GM12878 (cell line): ENCODE measurements at regions of chr3 and their contacts with region 1.

Region 1: GRCh38 chr3:149566292-149566975 is 91.4 kb downstream of the WWTR1 start:
- DNase-seq: no peak
- ATAC-seq: no peak
- H3K4me3 ChIP-seq: no peak overlapping the region
- H3K27ac ChIP-seq: no peak overlapping the region
- H3K4me1 ChIP-seq: no peaks in the 10 kb centered on the region
- H3K27me3 ChIP-seq: no peaks in the 10 kb centered on the region
- CTCF ChIP-seq: no peak
- EP300 ChIP-seq: no peak
- POLR2A ChIP-seq: no peak
- RAD21 ChIP-seq: no peak

Region 2: DNA sequence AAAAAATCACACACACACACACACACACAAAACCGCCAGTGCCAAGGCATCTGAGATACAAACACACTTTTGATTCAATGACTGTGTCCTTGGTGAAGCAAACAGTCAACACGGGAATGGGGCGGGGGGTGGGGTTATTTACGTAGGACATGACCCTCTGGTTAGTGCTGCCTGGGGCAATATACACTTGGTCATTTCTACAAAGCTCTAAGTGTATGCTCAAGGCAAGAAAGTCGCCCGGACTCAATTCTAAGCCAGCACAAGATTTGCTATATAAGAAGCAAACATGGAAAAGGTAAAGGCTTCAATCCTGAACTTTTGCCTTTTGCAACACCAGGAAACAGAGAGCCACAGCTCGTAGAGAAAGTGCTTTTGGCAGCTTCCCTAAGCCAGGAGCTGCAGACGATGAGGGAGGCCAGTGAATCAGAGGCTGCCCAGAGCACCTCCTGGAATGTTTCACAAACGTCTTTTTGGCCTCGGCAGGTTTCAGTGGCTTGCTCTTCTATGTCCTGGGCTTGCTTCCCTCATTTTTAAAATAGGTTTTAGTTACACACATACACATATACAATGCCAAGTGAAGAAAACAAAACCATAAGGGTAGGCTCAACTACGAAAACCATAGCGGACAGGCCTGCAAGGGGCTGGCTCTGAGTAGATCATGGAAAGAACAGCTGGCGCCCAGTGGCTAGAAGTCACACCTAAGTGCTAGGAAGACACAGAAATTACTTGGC is 18.3 kb before region 1 on chr3:
- CTCF ChIA-PET with region 1: interaction called, 17 read pairs
- POLR2A ChIA-PET with region 1: no interaction called
- RAD21 ChIA-PET with region 1: interaction called, 3 read pairs
- SMC1A ChIA-PET with region 1: interaction called, 7 read pairs
- in situ Hi-C with region 1: no loop called
- intact Hi-C with region 1: no loop called
- DNase-seq: no peak
- ATAC-seq: no peak
- H3K4me3 ChIP-seq: no peak overlapping the region
- H3K27ac ChIP-seq: no peak overlapping the region
- H3K4me1 ChIP-seq: peaks cover 9% of the 10 kb centered on the region
- H3K27me3 ChIP-seq: no peaks in the 10 kb centered on the region
- CTCF ChIP-seq: no peak
- EP300 ChIP-seq: no peak
- POLR2A ChIP-seq: no peak
- RAD21 ChIP-seq: no peak

Region 3: DNA sequence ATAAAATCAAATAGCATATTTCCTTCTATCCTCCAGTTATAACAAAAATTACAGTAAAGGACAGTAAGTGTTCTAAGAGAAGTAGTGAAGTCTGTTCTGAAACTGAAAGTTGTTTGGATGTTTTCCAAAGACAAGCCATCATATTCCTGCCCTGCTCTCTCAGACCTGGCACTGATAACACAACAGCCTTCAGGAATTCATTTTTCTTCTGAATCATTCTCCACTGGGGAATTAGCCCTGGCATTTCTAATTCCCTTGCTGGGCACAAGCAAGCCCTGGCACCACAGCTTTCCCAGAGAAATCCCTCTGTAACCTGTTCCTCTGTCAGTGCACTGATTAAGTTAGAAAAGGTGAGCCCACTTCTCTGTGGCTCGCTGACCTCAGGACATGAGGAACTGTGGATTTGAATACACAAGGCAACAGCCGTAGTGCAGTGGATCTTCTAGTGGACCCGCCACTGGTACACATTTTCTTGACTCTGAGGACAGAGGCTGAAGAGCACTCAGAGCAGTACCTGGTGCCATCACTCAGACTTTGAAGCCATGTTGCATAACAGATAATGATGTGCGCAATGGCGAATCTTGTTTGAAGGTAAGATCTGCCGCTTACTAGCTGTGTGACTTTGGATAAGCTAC is 29.8 kb after region 1 on chr3:
- CTCF ChIA-PET with region 1: interaction called, 80 read pairs
- POLR2A ChIA-PET with region 1: interaction called, 5 read pairs
- RAD21 ChIA-PET with region 1: interaction called, 181 read pairs
- SMC1A ChIA-PET with region 1: interaction called, 505 read pairs
- in situ Hi-C with region 1: no loop called
- intact Hi-C with region 1: loop called (anchors 5 kb)
- DNase-seq: no peak
- ATAC-seq: no peak
- H3K4me3 ChIP-seq: no peak overlapping the region
- H3K27ac ChIP-seq: no peak overlapping the region
- H3K4me1 ChIP-seq: peaks cover 7% of the 10 kb centered on the region
- H3K27me3 ChIP-seq: no peaks in the 10 kb centered on the region
- CTCF ChIP-seq: no peak
- EP300 ChIP-seq: no peak
- POLR2A ChIP-seq: no peak
- RAD21 ChIP-seq: no peak

Region 4: DNA sequence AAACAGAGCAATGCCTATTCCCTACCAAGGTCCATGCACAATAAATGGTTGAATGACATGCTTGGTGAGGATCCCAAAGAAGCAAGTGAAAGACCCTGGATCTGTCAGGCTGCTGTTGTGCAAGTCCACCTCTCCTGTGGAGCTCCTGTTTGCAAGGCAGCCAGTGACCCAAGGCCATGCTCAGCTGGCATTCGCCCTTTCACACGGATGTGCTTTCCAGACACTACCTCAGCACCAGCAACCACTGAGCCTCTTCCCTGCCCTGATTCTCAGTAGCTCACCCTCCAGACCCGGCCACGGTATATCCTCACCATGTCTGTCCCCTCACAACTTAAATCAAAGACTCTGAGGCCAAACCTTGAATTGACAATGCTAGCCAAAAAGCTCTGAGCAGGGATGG is 68.1 kb after region 1 on chr3:
- CTCF ChIA-PET with region 1: interaction called, 7 read pairs
- POLR2A ChIA-PET with region 1: no interaction called
- RAD21 ChIA-PET with region 1: interaction called, 4 read pairs
- SMC1A ChIA-PET with region 1: interaction called, 11 read pairs
- in situ Hi-C with region 1: no loop called
- intact Hi-C with region 1: no loop called
- DNase-seq: no peak
- ATAC-seq: no peak
- H3K4me3 ChIP-seq: no peak overlapping the region
- H3K27ac ChIP-seq: no peak overlapping the region
- H3K4me1 ChIP-seq: no peaks in the 10 kb centered on the region; the same call in 1 of the 2 replicates
- H3K27me3 ChIP-seq: no peaks in the 10 kb centered on the region
- CTCF ChIP-seq: no peak
- EP300 ChIP-seq: no peak
- POLR2A ChIP-seq: no peak
- RAD21 ChIP-seq: no peak

Region 5: GRCh38 chr3:149670742-149671492 is 104.5 kb after region 1 on chr3:
- CTCF ChIA-PET with region 1: interaction called, 29 read pairs
- POLR2A ChIA-PET with region 1: no interaction called
- RAD21 ChIA-PET with region 1: interaction called, 18 read pairs
- SMC1A ChIA-PET with region 1: interaction called, 19 read pairs
- in situ Hi-C with region 1: no loop called
- intact Hi-C with region 1: no loop called
- DNase-seq: no peak
- ATAC-seq: peak; percentile 72
- H3K4me3 ChIP-seq: peak overlapping the region; percentile 4
- H3K27ac ChIP-seq: no peak overlapping the region
- H3K4me1 ChIP-seq: no peaks in the 10 kb centered on the region; the same call in 1 of the 2 replicates
- H3K27me3 ChIP-seq: no peaks in the 10 kb centered on the region
- CTCF ChIP-seq: no peak
- EP300 ChIP-seq: no peak
- POLR2A ChIP-seq: no peak
- RAD21 ChIP-seq: no peak

Region 6: DNA sequence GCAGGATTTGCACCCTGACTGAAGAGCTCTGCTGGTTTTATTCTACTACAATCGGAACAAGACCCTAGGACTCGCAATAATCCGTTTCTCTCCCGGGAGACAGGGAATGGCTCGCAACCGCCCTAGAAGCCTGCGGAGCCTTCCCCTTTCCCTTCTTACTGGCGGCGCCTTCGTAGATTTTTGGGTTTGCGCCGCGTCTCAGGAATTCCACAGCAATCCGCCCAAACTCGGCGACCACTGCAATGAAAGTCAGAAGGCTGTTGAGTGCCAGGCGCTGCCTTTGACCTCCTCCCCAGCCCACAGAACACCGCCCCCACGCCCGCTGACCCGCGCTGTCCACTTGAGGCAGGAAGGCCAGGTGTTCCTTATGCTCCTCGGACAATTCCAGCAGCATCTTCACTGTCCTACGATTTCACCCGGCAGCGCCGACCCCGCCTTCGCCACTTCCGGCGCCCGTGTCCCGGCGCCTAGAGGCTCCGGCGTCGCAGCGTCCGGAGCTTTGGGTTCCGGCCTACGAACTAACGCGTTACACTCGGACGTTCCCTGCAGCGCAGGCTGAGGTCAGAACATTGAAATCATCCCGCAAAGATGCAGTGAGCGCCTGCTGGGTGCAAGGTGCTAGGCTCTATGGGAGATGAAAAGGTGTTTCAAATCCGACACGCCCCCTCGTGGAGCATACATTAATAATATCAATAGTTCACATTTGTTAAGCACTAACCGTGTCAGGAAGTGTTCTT is 185.8 kb after region 1 on chr3 and contains the start of gene COMMD2:
- CTCF ChIA-PET with region 1: interaction called, 35 read pairs
- POLR2A ChIA-PET with region 1: interaction called, 3 read pairs
- RAD21 ChIA-PET with region 1: interaction called, 34 read pairs
- SMC1A ChIA-PET with region 1: interaction called, 21 read pairs
- in situ Hi-C with region 1: no loop called
- intact Hi-C with region 1: no loop called
- DNase-seq: peak; percentile 84
- ATAC-seq: peak; percentile 100
- H3K4me3 ChIP-seq: peak within 1 kb of the TSS; percentile 85
- H3K27ac ChIP-seq: peak within 1 kb of the TSS; percentile 54
- H3K4me1 ChIP-seq: no peaks in the 10 kb centered on the region
- H3K27me3 ChIP-seq: no peaks in the 10 kb centered on the region
- CTCF ChIP-seq: peak; percentile 21 to 47 (median 46); a peak in 5 of 6 replicates
- EP300 ChIP-seq: no peak
- POLR2A ChIP-seq: peak; percentile 95
- RAD21 ChIP-seq: peak; percentile 40
- polyA plus RNA-seq, gene COMMD2: 59.4 to 97.0 TPM

Region 7: GRCh38 chr3:149812606-149813366 is 246.4 kb after region 1 on chr3 and contains the start of gene RNF13:
- CTCF ChIA-PET with region 1: interaction called, 14 read pairs
- POLR2A ChIA-PET with region 1: interaction called, 6 read pairs
- RAD21 ChIA-PET with region 1: interaction called, 26 read pairs
- SMC1A ChIA-PET with region 1: interaction called, 10 read pairs
- in situ Hi-C with region 1: no loop called
- intact Hi-C with region 1: no loop called
- DNase-seq: peak; percentile 87
- ATAC-seq: peak; percentile 94
- H3K4me3 ChIP-seq: peak within 1 kb of the TSS; percentile 80
- H3K27ac ChIP-seq: peak within 1 kb of the TSS; percentile 93
- H3K4me1 ChIP-seq: no peaks in the 10 kb centered on the region
- H3K27me3 ChIP-seq: no peaks in the 10 kb centered on the region
- CTCF ChIP-seq: no peak
- EP300 ChIP-seq: no peak
- POLR2A ChIP-seq: peak; percentile 83
- RAD21 ChIP-seq: no peak
- polyA plus RNA-seq, gene RNF13: 38.7 to 45.9 TPM

Region 8: GRCh38 chr3:149947231-149947630 is 380.8 kb after region 1 on chr3:
- CTCF ChIA-PET with region 1: no interaction called
- POLR2A ChIA-PET with region 1: no interaction called
- RAD21 ChIA-PET with region 1: no interaction called
- SMC1A ChIA-PET with region 1: no interaction called
- in situ Hi-C with region 1: no loop called
- intact Hi-C with region 1: no loop called
- DNase-seq: no peak
- ATAC-seq: no peak
- H3K4me3 ChIP-seq: no peak overlapping the region
- H3K27ac ChIP-seq: no peak overlapping the region
- H3K4me1 ChIP-seq: no peaks in the 10 kb centered on the region
- H3K27me3 ChIP-seq: no peaks in the 10 kb centered on the region
- CTCF ChIP-seq: no peak
- EP300 ChIP-seq: no peak
- POLR2A ChIP-seq: no peak
- RAD21 ChIP-seq: no peak